ENCODE measurements at regions of chr15 and their contacts with region 1.

Region 1: DNA sequence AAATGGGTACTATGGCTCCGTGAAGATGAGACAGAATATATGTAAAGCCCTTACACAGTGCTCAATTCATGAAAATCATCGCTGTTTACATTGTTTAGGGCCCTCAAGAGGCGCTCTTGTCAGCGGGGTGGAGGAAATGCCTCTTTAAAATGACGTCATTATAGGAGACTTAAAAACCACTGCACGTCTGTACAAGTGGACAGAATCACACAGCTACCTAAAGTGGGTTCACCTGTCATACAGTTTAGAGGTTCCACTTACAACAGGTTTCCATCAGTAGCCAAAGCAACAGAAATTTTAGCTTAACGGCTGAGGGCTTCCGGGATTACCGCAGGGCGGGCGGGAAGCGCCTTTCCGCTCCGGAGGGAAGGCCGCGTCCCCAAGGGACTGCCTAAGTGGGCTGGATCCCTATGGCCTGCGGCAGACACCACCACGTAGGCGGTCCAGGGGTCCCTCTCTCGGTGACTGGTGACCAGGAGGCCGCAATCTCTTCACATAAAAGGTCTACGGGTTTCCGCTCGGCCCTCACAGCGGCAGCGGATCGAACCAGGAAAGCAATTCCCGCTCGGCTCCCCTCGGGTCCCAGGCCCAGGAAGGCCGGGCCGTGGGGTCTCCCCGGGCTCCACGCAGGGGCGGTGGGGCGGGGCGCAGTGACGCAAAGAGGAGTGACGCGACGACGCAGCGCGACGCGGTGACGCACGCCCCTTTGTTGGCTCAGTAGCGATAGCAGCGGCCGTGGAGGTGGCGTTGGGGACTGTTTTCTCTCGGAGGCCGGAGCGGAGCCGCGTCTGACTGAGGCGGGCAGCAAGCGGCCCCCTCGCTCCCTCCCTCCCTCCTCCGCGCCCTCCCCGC is at the start of gene ARIH1:
- DNase-seq: peak; percentile 88
- ATAC-seq: peak; percentile 94
- H3K4me3 ChIP-seq: peak within 1 kb of the TSS; percentile 84
- H3K27ac ChIP-seq: peak within 1 kb of the TSS; percentile 98
- H3K4me1 ChIP-seq: peaks cover 12% of the 10 kb centered on the region
- H3K27me3 ChIP-seq: no peaks in the 10 kb centered on the region
- CTCF ChIP-seq: peak; percentile 56
- total RNA-seq, gene ARIH1: 192 TPM

Region 2: DNA sequence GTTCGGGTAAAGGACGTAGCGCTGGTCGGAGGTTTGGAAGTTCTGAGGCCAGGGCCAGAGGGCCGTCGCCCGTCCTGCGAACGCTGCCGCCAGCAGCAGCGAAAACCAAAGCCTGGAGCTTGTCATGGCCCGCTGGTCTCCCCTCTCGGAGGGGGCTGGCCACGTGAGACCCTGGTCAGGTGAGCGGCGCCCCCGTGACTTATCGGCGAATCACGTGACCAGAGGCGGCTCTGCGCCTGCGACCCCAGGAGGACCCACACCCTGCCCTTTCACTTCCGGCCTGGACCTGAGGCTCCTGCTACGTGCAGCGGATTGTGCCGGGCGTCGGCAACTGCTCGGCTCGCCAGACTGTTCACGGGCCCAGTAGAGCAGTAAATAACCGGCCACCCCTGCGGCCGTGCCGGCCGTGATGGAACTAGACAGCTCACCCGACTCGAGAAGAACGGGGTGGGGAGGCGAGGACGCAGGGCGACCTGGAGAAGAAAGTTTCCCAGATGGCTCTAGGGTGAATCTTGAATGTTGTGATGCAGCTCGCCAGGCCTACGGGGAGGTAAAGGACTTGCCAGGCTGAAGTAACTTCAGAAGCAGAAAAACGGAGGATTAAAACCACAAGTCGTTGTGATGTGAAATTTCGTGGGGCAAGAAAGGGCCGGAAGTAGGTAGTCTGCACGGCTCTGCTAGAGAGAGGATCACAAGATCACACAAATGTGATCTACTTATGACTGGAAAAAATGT is 97.8 kb before region 1 on chr15 and contains the start of gene HEXA:
- CTCF ChIA-PET with region 1: no interaction called
- POLR2A ChIA-PET with region 1: interaction called, 3 read pairs
- in situ Hi-C with region 1: no loop called
- intact Hi-C with region 1: loop called (anchors 10 kb)
- DNase-seq: peak; percentile 73
- ATAC-seq: peak; percentile 96
- H3K4me3 ChIP-seq: peak within 1 kb of the TSS; percentile 78 to 79
- H3K27ac ChIP-seq: peak within 1 kb of the TSS; percentile 93
- H3K4me1 ChIP-seq: peaks cover 8% of the 10 kb centered on the region; the same call in 1 of the 2 replicates
- H3K27me3 ChIP-seq: no peaks in the 10 kb centered on the region
- CTCF ChIP-seq: no peak
- total RNA-seq, gene HEXA: 199 TPM

Region 3: GRCh38 chr15:72406927-72407326 is 66.9 kb before region 1 on chr15:
- CTCF ChIA-PET with region 1: no interaction called
- POLR2A ChIA-PET with region 1: no interaction called
- in situ Hi-C with region 1: no loop called
- intact Hi-C with region 1: no loop called
- DNase-seq: no peak
- ATAC-seq: no peak
- H3K4me3 ChIP-seq: no peak overlapping the region
- H3K27ac ChIP-seq: no peak overlapping the region
- H3K4me1 ChIP-seq: no peaks in the 10 kb centered on the region
- H3K27me3 ChIP-seq: peaks cover 29% of the 10 kb centered on the region
- CTCF ChIP-seq: no peak

Region 4: DNA sequence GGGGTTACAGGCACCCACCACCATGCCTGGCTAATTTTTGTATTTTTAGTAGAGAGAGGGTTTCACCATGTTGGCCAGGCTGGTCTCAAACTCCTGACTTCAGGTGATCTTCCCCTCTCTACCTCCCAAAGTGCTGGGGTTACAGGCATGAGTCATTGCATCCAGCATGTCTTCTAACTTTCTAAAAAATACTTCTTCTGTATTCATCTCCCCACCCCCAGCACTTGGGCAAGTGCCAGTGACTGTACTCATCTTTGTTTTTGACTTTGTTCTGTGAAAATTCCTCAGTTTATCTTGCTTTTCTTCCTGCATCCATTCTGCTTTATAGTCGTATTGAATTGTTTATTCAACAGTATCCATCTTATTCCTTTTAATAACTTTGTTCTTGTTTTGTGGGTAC is 47.8 kb after region 1 on chr15:
- CTCF ChIA-PET with region 1: no interaction called
- POLR2A ChIA-PET with region 1: no interaction called
- in situ Hi-C with region 1: no loop called
- intact Hi-C with region 1: no loop called
- DNase-seq: no peak
- ATAC-seq: no peak
- H3K4me3 ChIP-seq: no peak overlapping the region
- H3K27ac ChIP-seq: no peak overlapping the region
- H3K4me1 ChIP-seq: no peaks in the 10 kb centered on the region
- H3K27me3 ChIP-seq: no peaks in the 10 kb centered on the region
- CTCF ChIP-seq: no peak